ENCODE measurements at regions of chr17 and their contacts with region 1.

Region 1: GRCh38 chr17:50944054-50944901 is 78.1 kb upstream of the TOB1 start:
- DNase-seq: peak; percentile 96 to 98
- H3K4me3 ChIP-seq: peak overlapping the region; percentile 52
- H3K4me3 Mint-ChIP-seq: peak overlapping the region; percentile 73
- H3K27ac Mint-ChIP-seq: peak overlapping the region; percentile 59
- H3K4me1 ChIP-seq: peaks cover 27% of the 10 kb centered on the region
- H3K4me1 Mint-ChIP-seq: peaks cover 29% of the 10 kb centered on the region
- H3K27me3 ChIP-seq: no peaks in the 10 kb centered on the region
- H3K27me3 Mint-ChIP-seq: no peaks in the 10 kb centered on the region
- CTCF ChIP-seq: peak; percentile 53 to 60

Region 2: GRCh38 chr17:50768348-50768778 is 175.9 kb before region 1 on chr17:
- CTCF ChIA-PET with region 1: no interaction called
- POLR2A ChIA-PET with region 1: no interaction called
- intact Hi-C with region 1: no loop called
- DNase-seq: peak; percentile 98 to 99
- H3K4me3 ChIP-seq: no peak overlapping the region
- H3K4me3 Mint-ChIP-seq: peak overlapping the region; percentile 50
- H3K27ac Mint-ChIP-seq: peak overlapping the region; percentile 10
- H3K4me1 ChIP-seq: peaks cover 59% of the 10 kb centered on the region
- H3K4me1 Mint-ChIP-seq: peaks cover 57% of the 10 kb centered on the region
- H3K27me3 ChIP-seq: no peaks in the 10 kb centered on the region
- H3K27me3 Mint-ChIP-seq: no peaks in the 10 kb centered on the region
- CTCF ChIP-seq: peak in 1 of 2 experiments; percentile 1

Region 3: GRCh38 chr17:50909765-50910605 is 34.3 kb before region 1 on chr17:
- CTCF ChIA-PET with region 1: interaction called, 10 read pairs
- POLR2A ChIA-PET with region 1: interaction called, 27 read pairs
- intact Hi-C with region 1: loop called (anchors 1 kb)
- DNase-seq: no peak
- H3K4me3 ChIP-seq: no peak overlapping the region
- H3K4me3 Mint-ChIP-seq: no peak overlapping the region
- H3K27ac Mint-ChIP-seq: no peak overlapping the region
- H3K4me1 ChIP-seq: peaks cover 47% of the 10 kb centered on the region
- H3K4me1 Mint-ChIP-seq: peaks cover 54% of the 10 kb centered on the region
- H3K27me3 ChIP-seq: no peaks in the 10 kb centered on the region
- H3K27me3 Mint-ChIP-seq: no peaks in the 10 kb centered on the region
- CTCF ChIP-seq: no peak

Region 4: DNA sequence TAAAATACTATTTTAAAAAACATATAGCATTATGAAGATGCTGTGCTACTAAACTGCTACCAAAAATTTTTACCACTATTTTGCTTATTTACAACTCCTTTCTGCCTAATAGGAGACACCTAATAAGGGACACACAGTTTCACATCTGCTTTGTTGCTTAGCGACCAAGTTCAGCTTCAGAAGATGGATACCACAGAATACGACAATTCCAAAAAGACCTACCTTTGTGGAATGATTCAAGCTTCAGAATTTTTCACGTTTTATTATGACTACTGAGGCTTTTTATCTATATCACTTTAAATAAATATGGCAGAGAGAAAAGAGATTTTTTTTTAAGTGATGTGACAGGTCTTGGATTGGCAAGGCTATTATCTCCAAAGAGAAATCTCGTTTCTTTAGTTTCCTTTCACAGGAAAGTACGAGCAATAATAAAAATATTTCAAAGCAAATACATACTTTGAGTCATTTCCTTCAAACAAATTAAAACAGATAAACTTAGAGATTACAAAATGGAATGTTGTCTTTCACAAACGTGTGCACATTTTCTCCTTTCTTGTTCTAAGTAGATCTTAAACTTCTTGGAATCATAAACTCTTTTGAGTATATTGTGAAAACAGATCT is 141.0 kb after region 1 on chr17:
- CTCF ChIA-PET with region 1: no interaction called
- POLR2A ChIA-PET with region 1: no interaction called
- intact Hi-C with region 1: no loop called
- DNase-seq: peak in 1 of 2 experiments; percentile 38
- H3K4me3 ChIP-seq: no peak overlapping the region
- H3K4me3 Mint-ChIP-seq: peak overlapping the region; percentile 18
- H3K27ac Mint-ChIP-seq: peak overlapping the region; percentile 58
- H3K4me1 ChIP-seq: peaks cover 34% of the 10 kb centered on the region
- H3K4me1 Mint-ChIP-seq: peaks cover 16% of the 10 kb centered on the region
- H3K27me3 ChIP-seq: no peaks in the 10 kb centered on the region
- H3K27me3 Mint-ChIP-seq: no peaks in the 10 kb centered on the region
- CTCF ChIP-seq: no peak